B cell (primary cell): ENCODE measurements at regions of chr10 and their contacts with region 1.

Region 1: GRCh38 chr10:6401562-6402348 is 178.3 kb downstream of the PRKCQ start:
- DNase-seq: peak; percentile 85
- ATAC-seq: peak; percentile 88
- H3K4me3 ChIP-seq: peak overlapping the region in 2 of 5 experiments; percentile 5 to 12
- H3K4me3 Mint-ChIP-seq: peak overlapping the region; percentile 75
- H3K27ac ChIP-seq: no peak overlapping the region
- H3K27ac Mint-ChIP-seq: peak overlapping the region; percentile 10
- H3K4me1 ChIP-seq: peaks cover 26% of the 10 kb centered on the region in 2 donors
- H3K4me1 Mint-ChIP-seq: peaks cover 33% of the 10 kb centered on the region
- H3K27me3 ChIP-seq: peaks cover 0 to 4% (median 2%) of the 10 kb centered on the region in 4 experiments
- H3K27me3 Mint-ChIP-seq: peaks cover 22% of the 10 kb centered on the region
- CTCF ChIP-seq: peak; percentile 82

Region 2: DNA sequence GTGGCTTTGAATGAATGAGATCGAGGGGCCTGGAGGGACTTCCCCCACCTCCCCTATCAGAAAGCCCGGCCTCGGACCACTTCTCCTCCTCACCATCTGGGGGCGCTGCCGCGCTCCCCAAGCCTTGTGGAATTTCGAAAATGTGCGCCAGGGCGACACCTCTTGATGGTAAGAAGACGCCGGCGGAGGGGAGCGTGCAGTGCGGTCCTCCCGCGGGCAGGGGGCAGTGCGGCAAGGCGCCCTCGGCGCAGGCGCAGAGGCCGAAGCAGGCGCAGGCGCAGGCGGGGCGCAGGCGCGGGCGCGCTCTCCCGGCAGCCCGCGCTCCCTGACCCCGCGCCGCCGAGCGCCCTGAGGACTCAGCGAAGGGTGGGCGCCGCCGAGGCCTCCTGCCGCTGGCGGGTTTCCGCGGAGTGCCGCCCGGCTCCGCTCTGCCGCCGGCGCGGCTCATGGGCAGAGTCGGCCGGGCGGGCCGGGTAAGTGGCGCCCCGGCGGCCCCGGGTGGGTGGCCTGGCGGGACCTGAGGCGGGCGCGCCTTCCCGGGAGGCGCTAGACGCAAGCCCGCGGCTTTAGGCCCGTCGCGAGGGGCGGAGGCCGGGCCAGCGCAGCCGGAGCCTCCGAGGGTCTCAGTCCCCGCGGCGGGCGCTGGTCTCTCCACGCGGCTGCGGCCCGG is 312.9 kb before region 1 on chr10 and contains the start of gene RBM17:
- CTCF ChIA-PET with region 1: interaction called, 40 read pairs
- POLR2A ChIA-PET with region 1: no interaction called
- intact Hi-C with region 1: loop called (anchors 5 kb)
- DNase-seq: peak; percentile 99
- ATAC-seq: peak; percentile 88
- H3K4me3 ChIP-seq: peak within 1 kb of the TSS; percentile 70 to 94 (median 77)
- H3K4me3 Mint-ChIP-seq: peak within 1 kb of the TSS; percentile 90
- H3K27ac ChIP-seq: peak within 1 kb of the TSS in 1 of 2 donors; percentile 78
- H3K27ac Mint-ChIP-seq: peak within 1 kb of the TSS; percentile 92
- H3K4me1 ChIP-seq: peaks cover 41 to 43% of the 10 kb centered on the region in 2 donors
- H3K4me1 Mint-ChIP-seq: peaks cover 63% of the 10 kb centered on the region
- H3K27me3 ChIP-seq: no peaks in the 10 kb centered on the region
- H3K27me3 Mint-ChIP-seq: no peaks in the 10 kb centered on the region
- CTCF ChIP-seq: peak; percentile 100
- total RNA-seq, gene RBM17: 162 and 168 TPM in 2 replicates

Region 3: DNA sequence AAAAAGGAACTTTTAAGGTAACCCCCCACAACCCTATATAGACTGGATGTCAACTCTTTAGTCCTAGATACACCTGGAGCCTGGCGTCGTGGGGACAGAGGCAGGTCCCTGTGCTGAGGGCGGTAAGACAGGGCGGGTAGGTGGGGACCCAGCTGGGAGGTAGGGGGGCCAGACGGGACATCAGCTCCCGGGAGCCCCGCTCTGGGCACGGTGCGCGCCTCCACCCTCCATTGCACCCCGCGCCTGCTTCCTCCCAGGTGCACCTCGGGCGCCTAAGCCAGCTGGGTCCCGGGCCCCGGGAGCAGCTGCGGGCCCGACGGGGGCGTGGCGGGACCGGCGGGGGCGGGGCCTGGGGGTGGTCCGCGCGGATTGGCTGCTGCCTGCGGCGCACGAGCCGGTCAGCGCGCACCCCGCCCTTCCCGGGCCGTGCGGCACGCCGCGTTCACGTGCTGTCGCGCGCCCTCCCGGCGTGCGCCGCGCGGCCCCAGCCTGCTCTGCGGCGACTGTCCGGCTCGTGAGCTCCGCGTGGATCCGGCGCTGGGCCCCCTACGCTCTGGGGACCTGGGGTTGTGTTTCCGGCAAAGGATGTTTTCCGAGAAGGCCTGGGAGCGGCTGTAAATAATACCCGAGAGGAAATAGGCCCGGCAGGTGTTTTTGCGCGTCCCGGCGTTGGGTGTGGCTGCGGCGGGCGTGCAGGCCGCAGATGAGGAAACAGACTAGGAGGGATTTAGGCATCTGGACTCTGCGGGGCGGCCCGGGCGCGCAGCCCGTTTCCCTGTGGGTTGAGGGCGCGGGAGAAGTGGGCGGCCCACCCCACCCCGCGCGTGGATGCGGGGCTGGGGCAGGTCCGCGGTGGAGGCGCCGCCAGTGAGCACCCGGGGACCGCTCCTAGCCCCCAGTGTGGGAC is 238.1 kb before region 1 on chr10:
- CTCF ChIA-PET with region 1: interaction called, 22 read pairs
- POLR2A ChIA-PET with region 1: no interaction called
- intact Hi-C with region 1: loop called (anchors 2 kb)
- DNase-seq: peak; percentile 95
- ATAC-seq: peak; percentile 96
- H3K4me3 ChIP-seq: peak overlapping the region in 4 of 5 experiments; percentile 69 to 84 (median 72)
- H3K4me3 Mint-ChIP-seq: peak overlapping the region; percentile 97
- H3K27ac ChIP-seq: peak overlapping the region; percentile 89 to 96
- H3K27ac Mint-ChIP-seq: peak overlapping the region; percentile 98
- H3K4me1 ChIP-seq: peaks cover 16 to 19% of the 10 kb centered on the region in 2 donors
- H3K4me1 Mint-ChIP-seq: peaks cover 39% of the 10 kb centered on the region
- H3K27me3 ChIP-seq: no peaks in the 10 kb centered on the region
- H3K27me3 Mint-ChIP-seq: no peaks in the 10 kb centered on the region
- CTCF ChIP-seq: no peak

Region 4: DNA sequence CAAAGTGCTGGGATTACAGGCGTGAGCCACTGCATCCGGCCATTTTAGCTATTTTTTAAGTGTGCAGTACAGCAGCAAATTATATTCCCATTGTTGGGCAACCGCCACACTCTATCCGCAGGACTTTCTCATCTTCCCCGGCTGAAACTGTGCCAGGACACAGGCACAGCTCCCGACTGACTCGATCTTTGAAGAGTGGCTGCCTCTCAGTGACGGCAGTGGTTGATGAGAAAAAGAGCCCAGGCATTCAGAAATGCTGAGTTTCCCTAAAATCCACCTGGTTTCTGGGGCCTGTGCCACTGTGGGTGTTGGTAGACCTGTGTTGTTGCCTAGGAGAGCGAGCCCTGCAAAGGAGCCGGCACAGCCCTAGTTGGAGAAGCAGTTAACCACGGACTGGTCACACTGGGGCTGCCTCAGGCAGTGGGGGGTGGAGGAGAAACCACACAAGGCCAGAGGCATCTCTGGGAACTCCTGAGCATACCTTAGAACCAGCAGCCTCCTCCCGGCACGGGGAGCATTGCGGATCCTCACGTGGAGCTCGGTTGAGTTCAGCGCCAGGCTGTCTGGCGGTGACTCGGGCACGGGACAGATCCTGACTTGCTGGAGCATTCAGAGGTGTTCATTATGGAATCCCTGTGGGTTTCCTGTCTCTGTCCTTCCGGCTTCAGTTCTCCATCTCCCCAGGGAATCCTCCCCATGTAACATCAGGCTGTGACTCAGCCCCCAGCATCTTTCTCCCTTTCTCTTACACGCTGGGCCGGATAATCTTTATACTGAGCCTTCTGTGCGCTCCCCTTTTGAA is 182.9 kb before region 1 on chr10:
- CTCF ChIA-PET with region 1: interaction called, 12 read pairs
- POLR2A ChIA-PET with region 1: no interaction called
- intact Hi-C with region 1: no loop called
- DNase-seq: no peak
- ATAC-seq: no peak
- H3K4me3 ChIP-seq: no peak overlapping the region
- H3K4me3 Mint-ChIP-seq: no peak overlapping the region
- H3K27ac ChIP-seq: no peak overlapping the region
- H3K27ac Mint-ChIP-seq: peak overlapping the region; percentile 63
- H3K4me1 ChIP-seq: peaks cover 6 to 9% of the 10 kb centered on the region in 2 donors
- H3K4me1 Mint-ChIP-seq: peaks cover 13% of the 10 kb centered on the region
- H3K27me3 ChIP-seq: no peaks in the 10 kb centered on the region
- H3K27me3 Mint-ChIP-seq: no peaks in the 10 kb centered on the region
- CTCF ChIP-seq: no peak

Region 5: DNA sequence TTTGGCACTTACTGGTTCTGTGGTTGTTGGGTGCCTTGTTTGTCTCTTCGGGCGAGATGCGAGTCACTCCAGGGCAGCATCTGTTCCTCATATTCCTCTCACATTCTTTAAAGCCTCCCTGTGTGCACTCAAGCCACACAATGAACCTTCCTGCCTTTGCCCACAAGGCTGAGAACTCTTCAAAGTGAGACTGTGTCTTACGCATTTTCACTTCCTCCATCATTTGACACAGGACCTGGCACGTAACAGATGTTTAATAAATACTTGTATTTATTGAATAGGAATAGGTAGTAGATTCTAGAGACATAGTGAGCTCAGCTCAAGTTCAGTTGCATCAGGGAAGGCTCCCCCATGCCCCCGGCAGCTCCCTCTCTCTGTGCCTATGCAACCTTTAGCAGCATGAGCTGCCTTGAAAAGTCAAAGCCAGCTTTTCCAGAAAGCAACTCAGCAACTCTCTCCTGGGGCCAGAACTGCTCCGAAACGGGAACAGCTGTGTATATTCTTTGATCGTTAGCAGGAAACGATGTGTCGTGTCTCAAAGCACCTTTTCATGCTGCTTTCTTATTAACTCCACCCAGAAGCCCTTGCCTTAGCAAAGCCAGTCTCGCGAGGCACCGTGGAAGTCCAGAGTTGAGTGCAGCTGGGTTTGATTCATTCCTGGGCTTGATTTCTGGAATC is 101.5 kb before region 1 on chr10:
- CTCF ChIA-PET with region 1: interaction called, 36 read pairs
- POLR2A ChIA-PET with region 1: interaction called, 3 read pairs
- intact Hi-C with region 1: loop called (anchors 1 kb)
- DNase-seq: peak; percentile 86
- ATAC-seq: peak; percentile 85
- H3K4me3 ChIP-seq: peak overlapping the region in 4 of 5 experiments; percentile 0 to 49 (median 22)
- H3K4me3 Mint-ChIP-seq: peak overlapping the region; percentile 75
- H3K27ac ChIP-seq: peak overlapping the region; percentile 70 to 75
- H3K27ac Mint-ChIP-seq: peak overlapping the region; percentile 87
- H3K4me1 ChIP-seq: peaks cover 39 to 74% of the 10 kb centered on the region in 2 donors
- H3K4me1 Mint-ChIP-seq: peaks cover 67% of the 10 kb centered on the region
- H3K27me3 ChIP-seq: no peaks in the 10 kb centered on the region
- H3K27me3 Mint-ChIP-seq: no peaks in the 10 kb centered on the region
- CTCF ChIP-seq: no peak

Region 6: GRCh38 chr10:6328699-6329423 is 72.9 kb before region 1 on chr10:
- CTCF ChIA-PET with region 1: interaction called, 24 read pairs
- POLR2A ChIA-PET with region 1: interaction called, 3 read pairs
- intact Hi-C with region 1: no loop called
- DNase-seq: peak; percentile 68
- ATAC-seq: peak; percentile 57
- H3K4me3 ChIP-seq: peak overlapping the region in 4 of 5 experiments; percentile 16 to 54 (median 40)
- H3K4me3 Mint-ChIP-seq: peak overlapping the region; percentile 77
- H3K27ac ChIP-seq: peak overlapping the region; percentile 50 to 62
- H3K27ac Mint-ChIP-seq: peak overlapping the region; percentile 86
- H3K4me1 ChIP-seq: peaks cover 21 to 27% of the 10 kb centered on the region in 2 donors
- H3K4me1 Mint-ChIP-seq: peaks cover 33% of the 10 kb centered on the region
- H3K27me3 ChIP-seq: no peaks in the 10 kb centered on the region
- H3K27me3 Mint-ChIP-seq: no peaks in the 10 kb centered on the region
- CTCF ChIP-seq: no peak

Region 7: DNA sequence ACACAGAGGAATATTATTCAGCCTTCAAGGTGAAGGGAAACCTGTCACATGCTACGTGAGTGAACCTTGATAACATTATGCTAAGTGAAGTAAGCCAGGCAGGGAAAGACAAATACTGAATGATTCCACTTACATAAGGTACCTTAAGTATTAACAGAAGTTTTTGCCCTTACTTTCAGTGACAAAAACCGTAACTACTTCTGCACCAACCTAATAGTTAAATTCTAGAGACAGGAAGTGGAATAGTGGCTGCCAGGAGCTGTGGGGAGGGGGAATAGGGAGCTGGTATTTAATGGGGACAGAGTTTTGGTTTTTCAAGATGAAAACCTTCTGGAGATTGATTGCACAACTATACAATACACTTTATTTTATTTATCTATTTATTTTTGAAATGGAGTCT is 41.9 kb after region 1 on chr10:
- CTCF ChIA-PET with region 1: no interaction called
- POLR2A ChIA-PET with region 1: no interaction called
- intact Hi-C with region 1: no loop called
- DNase-seq: no peak
- ATAC-seq: no peak
- H3K4me3 ChIP-seq: no peak overlapping the region
- H3K4me3 Mint-ChIP-seq: no peak overlapping the region
- H3K27ac ChIP-seq: no peak overlapping the region
- H3K27ac Mint-ChIP-seq: no peak overlapping the region
- H3K4me1 ChIP-seq: no peaks in the 10 kb centered on the region
- H3K4me1 Mint-ChIP-seq: peaks cover 3% of the 10 kb centered on the region
- H3K27me3 ChIP-seq: no peaks in the 10 kb centered on the region
- H3K27me3 Mint-ChIP-seq: peaks cover 23% of the 10 kb centered on the region
- CTCF ChIP-seq: no peak

Region 8: DNA sequence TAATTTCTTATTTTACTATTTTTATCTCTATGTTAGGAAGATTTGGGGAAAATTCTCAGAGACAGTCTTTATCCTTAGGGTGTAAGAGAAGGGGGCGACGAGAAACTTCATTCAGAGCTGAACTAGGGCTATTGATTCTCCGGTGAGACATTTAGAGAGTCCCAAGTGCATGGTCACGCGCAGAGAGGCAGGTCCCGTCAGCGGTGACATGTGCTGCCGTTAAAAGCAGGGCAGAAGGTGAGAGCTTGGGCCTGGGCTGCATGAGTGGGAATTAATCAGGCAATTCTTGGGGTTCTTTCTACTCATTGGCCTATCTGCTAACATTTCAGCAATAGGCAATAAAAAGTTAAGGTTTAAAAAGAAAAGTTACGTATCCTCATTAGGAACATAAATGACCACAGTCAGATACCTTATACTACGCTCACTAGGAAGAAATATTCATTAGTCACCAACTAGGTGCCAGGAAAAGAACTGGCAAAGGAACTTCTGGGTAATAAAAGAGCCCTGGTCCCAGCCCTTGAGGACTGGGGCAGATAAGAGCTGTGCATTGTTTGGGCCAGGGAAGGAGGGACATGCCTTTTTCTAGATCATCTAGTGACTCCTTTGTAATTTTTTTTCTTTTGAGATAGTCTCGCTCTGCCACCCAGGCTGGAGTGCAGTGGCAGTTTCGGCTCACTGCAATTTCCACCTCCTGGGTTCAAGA is 157.2 kb after region 1 on chr10:
- CTCF ChIA-PET with region 1: no interaction called
- POLR2A ChIA-PET with region 1: no interaction called
- intact Hi-C with region 1: no loop called
- DNase-seq: no peak
- ATAC-seq: no peak
- H3K4me3 ChIP-seq: no peak overlapping the region
- H3K4me3 Mint-ChIP-seq: no peak overlapping the region
- H3K27ac ChIP-seq: no peak overlapping the region
- H3K27ac Mint-ChIP-seq: no peak overlapping the region
- H3K4me1 ChIP-seq: no peaks in the 10 kb centered on the region
- H3K4me1 Mint-ChIP-seq: no peaks in the 10 kb centered on the region
- H3K27me3 ChIP-seq: no peaks in the 10 kb centered on the region
- H3K27me3 Mint-ChIP-seq: peaks cover 38% of the 10 kb centered on the region
- CTCF ChIP-seq: no peak